ENCODE measurements at regions of chr22 and their contacts with region 1.

Region 1: GRCh38 chr22:40276996-40277823 is 69.1 kb upstream of the ADSL start:
- DNase-seq: no peak
- ATAC-seq: peak; percentile 73

Region 2: GRCh38 chr22:40044102-40044869 is 232.9 kb before region 1 on chr22:
- intact Hi-C with region 1: loop called (anchors 5 kb)
- DNase-seq: peak; percentile 97
- ATAC-seq: peak; percentile 95

Region 3: GRCh38 chr22:40070701-40071100 is 206.5 kb before region 1 on chr22:
- intact Hi-C with region 1: no loop called
- DNase-seq: no peak
- ATAC-seq: peak; percentile 68

Region 4: GRCh38 chr22:40193429-40194421 is 83.5 kb before region 1 on chr22:
- intact Hi-C with region 1: loop called (anchors 5 kb)
- DNase-seq: no peak
- ATAC-seq: no peak

Region 5: DNA sequence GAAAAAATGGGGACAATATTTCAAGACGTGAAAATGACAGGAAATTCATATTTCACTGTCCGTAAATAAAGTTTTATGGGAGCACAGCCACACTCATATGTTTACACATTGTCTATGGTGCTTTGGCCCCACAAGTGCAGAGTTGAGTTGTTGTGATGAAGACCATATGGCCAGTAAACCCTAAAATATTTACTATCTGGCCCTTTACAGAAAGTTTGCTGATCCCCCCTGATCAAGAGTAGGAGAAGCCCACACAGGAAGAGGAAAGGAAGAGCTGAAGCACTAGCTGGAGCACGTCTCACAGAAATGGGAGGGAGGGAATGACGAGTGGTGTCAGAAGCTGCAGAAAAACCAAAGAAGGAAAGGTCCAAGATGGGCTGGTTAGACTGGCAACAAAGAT is 20.7 kb before region 1 on chr22:
- intact Hi-C with region 1: loop called (anchors 2 kb)
- DNase-seq: no peak
- ATAC-seq: no peak